ENCODE measurements at regions of chr16 and their contacts with region 1.

Region 1: DNA sequence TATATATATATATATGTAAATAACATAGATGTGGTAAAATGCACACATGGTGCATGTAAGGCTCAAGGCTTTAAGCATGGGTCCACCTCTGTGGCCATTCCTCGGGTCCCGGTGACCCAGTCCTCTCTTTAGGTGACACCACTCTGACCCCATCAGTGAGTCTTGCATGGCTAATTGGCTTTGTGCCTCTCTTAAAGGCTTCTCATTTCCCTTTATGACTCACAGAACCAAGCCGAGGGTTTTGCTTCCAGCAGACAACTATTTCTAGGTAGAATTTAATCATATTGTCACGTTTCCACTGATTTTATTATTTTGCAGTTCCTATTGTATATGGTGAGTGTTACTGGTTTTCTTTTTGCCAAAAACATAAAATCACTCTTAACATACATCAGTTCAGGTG is 59.7 kb downstream of the PLCG2 start:
- DNase-seq: peak; percentile 57
- ATAC-seq: peak; percentile 64
- H3K4me3 ChIP-seq: no peak overlapping the region
- H3K27ac ChIP-seq: peak overlapping the region; percentile 54
- H3K4me1 ChIP-seq: peaks cover 87% of the 10 kb centered on the region
- H3K27me3 ChIP-seq: no peaks in the 10 kb centered on the region
- CTCF ChIP-seq: no peak
- EP300 ChIP-seq: peak; percentile 26 to 53; a peak in 2 of 4 replicates
- POLR2A ChIP-seq: peak; percentile 44; the same call in 1 of the 2 replicates
- RAD21 ChIP-seq: no peak

Region 2: DNA sequence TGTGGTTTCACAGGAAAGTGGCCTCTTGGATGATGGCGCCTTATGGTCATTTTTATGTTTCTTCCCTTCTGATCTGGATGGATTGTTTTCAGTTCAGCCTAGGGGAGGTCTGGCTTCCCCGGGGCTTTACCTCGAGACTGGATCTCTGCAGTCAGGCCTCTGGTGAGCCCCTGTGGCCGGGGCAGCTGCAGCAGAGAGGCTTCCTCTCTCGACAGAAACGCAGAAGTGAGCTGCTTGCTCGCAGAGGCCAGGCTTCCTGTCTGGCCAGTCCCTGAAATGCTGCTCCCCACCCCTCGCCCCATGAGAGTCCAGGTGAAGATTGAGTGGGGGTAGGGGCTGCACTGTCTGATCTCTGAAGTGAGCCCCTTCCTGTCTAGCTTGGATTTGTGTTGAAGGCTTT is 15.7 kb before region 1 on chr16:
- CTCF ChIA-PET with region 1: interaction called, 27 read pairs
- POLR2A ChIA-PET with region 1: interaction called, 29 read pairs
- RAD21 ChIA-PET with region 1: interaction called, 50 read pairs
- SMC1A ChIA-PET with region 1: interaction called, 135 read pairs
- in situ Hi-C with region 1: no loop called
- intact Hi-C with region 1: loop called (anchors 2 kb)
- DNase-seq: no peak
- ATAC-seq: peak; percentile 72
- H3K4me3 ChIP-seq: peak overlapping the region; percentile 71
- H3K27ac ChIP-seq: peak overlapping the region; percentile 98
- H3K4me1 ChIP-seq: peaks cover 86% of the 10 kb centered on the region
- H3K27me3 ChIP-seq: no peaks in the 10 kb centered on the region
- CTCF ChIP-seq: peak; percentile 4 to 42 (median 11); a peak in 2 of 6 replicates
- EP300 ChIP-seq: peak; percentile 23 to 60; a peak in 3 of 4 replicates
- POLR2A ChIP-seq: peak; percentile 80
- RAD21 ChIP-seq: peak; percentile 53

Region 3: DNA sequence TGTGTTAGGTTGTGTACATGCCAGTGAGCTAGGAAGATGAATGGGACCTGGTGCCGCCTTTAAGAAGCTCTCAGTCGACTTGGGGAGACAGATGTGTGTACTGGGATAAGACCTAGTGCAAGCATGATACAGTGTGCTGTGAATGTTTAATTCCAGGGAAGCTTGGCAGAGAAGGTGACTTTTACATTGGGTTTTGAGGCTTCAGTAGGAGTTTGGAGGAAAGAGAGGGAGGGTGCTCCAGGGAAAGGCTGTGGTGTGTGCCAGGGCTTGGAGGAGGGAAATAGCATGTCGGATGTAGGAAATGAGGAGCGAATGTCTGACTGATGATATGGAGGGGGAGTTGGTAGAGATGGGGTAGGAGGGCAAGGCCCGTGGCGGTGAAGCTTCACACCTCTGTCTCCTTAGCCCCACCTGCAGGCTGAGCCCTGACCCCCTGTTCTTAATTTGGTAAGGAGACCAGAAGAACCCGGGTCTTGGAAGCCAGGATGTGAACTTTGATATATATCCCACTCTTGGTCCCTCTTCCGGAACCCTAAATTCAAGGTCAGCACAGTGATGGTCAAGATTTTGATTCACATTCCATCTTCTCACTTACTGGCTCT is 16.9 kb after region 1 on chr16:
- CTCF ChIA-PET with region 1: interaction called, 5 read pairs
- POLR2A ChIA-PET with region 1: interaction called, 7 read pairs
- RAD21 ChIA-PET with region 1: interaction called, 5 read pairs
- SMC1A ChIA-PET with region 1: interaction called, 22 read pairs
- in situ Hi-C with region 1: no loop called
- intact Hi-C with region 1: no loop called
- DNase-seq: no peak
- ATAC-seq: peak; percentile 56
- H3K4me3 ChIP-seq: no peak overlapping the region
- H3K27ac ChIP-seq: no peak overlapping the region
- H3K4me1 ChIP-seq: peaks cover 6% of the 10 kb centered on the region
- H3K27me3 ChIP-seq: no peaks in the 10 kb centered on the region
- CTCF ChIP-seq: 0 out of 6 replicates have a peak, but pooled peaks of 2 of the 3 experiments have one; percentile 1 to 20
- EP300 ChIP-seq: no peak
- POLR2A ChIP-seq: no peak
- RAD21 ChIP-seq: peak; percentile 22; the same call in 1 of the 2 replicates

Region 4: GRCh38 chr16:81863630-81864352 is 25.0 kb after region 1 on chr16:
- CTCF ChIA-PET with region 1: interaction called, 9 read pairs
- POLR2A ChIA-PET with region 1: interaction called, 7 read pairs
- RAD21 ChIA-PET with region 1: interaction called, 10 read pairs
- SMC1A ChIA-PET with region 1: interaction called, 8 read pairs
- in situ Hi-C with region 1: no loop called
- intact Hi-C with region 1: no loop called
- DNase-seq: peak; percentile 43
- ATAC-seq: peak; percentile 82
- H3K4me3 ChIP-seq: peak overlapping the region; percentile 13; the same call in 1 of the 2 replicates
- H3K27ac ChIP-seq: peak overlapping the region; percentile 1; the same call in 1 of the 2 replicates
- H3K4me1 ChIP-seq: peaks cover 60% of the 10 kb centered on the region
- H3K27me3 ChIP-seq: no peaks in the 10 kb centered on the region
- CTCF ChIP-seq: 0 out of 6 replicates have a peak, but pooled peaks of 1 of the 3 experiments have one; percentile 8
- EP300 ChIP-seq: no peak
- POLR2A ChIP-seq: peak; percentile 51
- RAD21 ChIP-seq: 0 out of 2 replicates have a peak, but pooled peaks have one; percentile 1